Mammary epithelial cell (primary cell): ENCODE measurements at regions of chr12 and their contacts with region 1.

Region 1: DNA sequence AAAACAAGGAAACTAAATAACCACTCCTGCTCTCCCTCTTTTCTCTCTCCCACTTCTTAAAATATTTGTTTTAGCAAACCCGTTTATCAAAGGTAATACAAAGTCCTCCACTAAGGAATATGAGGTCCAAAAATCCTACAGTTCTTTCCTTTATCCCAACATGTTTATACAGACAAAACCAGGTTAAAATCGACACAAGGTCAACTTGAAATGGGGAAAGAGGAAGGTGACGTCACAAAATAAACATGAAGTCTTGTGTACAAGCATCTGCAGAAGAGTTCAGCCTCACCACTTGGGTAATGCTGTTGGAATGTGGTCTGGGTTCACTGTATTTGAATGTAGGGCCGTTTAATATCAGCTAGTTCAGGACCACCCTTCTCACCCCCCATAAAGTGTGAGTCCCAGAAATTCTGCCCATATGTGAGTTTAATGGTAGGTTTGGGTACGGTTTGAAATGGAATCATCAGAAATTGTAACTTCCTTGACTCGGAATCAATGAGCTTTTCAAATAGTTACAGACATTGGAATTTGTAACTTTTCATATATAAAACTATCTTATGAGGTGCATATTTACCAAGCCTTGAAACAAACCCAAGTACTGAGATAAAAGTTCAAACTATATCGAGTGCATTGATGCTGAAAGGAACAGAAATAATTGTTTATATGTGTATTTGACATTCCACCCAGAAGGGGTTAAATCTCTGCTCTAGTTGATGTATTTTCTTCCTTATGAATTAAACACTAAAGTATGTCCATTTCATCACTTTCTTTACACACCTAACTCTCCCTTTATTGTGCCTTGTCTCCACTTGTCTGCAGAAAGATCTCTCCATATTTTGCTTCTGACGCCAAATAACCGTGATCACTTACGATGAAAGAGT is 120.1 kb upstream of the SLC38A2 start:
- DNase-seq: peak; percentile 85
- H3K4me3 ChIP-seq: no peak overlapping the region
- H3K27ac ChIP-seq: peak overlapping the region; percentile 94
- H3K4me1 ChIP-seq: peaks cover 56% of the 10 kb centered on the region
- H3K27me3 ChIP-seq: no peaks in the 10 kb centered on the region
- CTCF ChIP-seq: peak; percentile 12 to 17

Region 2: GRCh38 chr12:46450279-46450748 is 42.4 kb before region 1 on chr12:
- CTCF ChIA-PET with region 1: no interaction called
- dilution Hi-C with region 1: no loop called
- in situ Hi-C with region 1: no loop called
- intact Hi-C with region 1: loop called (anchors 2 kb)
- DNase-seq: peak; percentile 32
- H3K4me3 ChIP-seq: no peak overlapping the region
- H3K27ac ChIP-seq: no peak overlapping the region
- H3K4me1 ChIP-seq: peaks cover 62% of the 10 kb centered on the region
- H3K27me3 ChIP-seq: no peaks in the 10 kb centered on the region
- CTCF ChIP-seq: no peak